ENCODE measurements at regions of chr9 and their contacts with region 1.

Region 1: DNA sequence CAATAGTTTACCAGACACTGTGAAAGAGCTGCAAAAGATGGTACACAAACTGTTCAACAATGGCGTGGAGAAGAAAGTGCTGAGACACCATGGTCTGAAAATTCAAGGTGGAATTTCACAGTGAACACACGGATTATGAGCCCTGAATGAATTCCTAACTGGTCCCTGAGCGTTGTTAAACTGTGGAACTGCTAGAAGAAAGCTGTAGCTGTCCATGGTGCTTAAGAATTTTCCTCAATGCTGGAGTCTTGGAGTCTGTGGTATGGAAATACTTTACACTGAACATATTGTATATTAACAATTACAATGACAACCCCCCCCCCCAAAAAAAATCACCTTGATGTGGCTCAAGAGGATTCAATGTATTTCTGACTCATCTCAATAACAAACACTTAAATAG is 68.5 kb downstream of the SLC24A2 start:
- DNase-seq: no peak
- ATAC-seq: no peak

Region 2: DNA sequence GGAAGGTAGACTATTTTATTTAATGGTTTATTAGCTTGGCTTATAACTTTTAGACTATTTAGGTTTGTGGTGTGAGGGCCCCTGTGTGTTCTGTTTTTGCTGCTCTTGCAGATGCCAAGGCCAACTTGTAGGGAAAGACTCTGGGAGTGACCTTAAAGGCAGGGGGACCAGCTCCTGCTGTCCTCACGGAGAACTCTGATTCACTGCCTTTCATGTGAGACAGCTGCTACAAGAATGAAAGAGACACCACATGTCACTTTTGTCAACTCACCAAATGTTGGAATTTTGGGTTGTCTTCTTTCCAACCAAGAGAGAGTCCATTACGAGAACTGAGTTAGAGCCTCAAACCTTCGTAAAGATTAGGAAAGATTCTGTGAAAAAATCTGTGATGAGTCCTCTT is 1504.8 kb before region 1 on chr9:
- intact Hi-C with region 1: loop called (anchors 5 kb)
- DNase-seq: no peak
- ATAC-seq: no peak

Region 3: GRCh38 chr9:19154135-19154612 is 566.2 kb before region 1 on chr9:
- intact Hi-C with region 1: loop called (anchors 10 kb)
- DNase-seq: no peak
- ATAC-seq: peak; percentile 73

Region 4: DNA sequence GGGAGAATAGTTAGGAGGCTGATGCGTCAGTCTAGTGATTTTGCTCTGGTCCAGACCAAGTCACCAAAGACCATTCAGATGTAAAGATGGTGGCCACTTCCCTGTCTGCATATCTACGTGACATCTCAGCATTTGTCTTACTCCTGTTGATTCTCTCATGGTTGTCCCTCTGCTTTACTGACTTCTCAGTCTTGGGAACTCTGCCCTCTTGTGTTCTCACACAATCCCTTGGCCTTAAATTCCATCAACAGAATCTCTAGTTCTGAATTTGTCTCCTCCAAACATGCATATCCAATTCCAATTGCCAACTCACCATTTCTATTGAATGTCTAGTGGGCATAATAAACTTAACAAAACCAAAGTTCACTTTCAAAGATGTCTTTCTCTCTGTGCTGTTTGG is 79.3 kb before region 1 on chr9:
- intact Hi-C with region 1: no loop called
- DNase-seq: no peak
- ATAC-seq: no peak

Region 5: DNA sequence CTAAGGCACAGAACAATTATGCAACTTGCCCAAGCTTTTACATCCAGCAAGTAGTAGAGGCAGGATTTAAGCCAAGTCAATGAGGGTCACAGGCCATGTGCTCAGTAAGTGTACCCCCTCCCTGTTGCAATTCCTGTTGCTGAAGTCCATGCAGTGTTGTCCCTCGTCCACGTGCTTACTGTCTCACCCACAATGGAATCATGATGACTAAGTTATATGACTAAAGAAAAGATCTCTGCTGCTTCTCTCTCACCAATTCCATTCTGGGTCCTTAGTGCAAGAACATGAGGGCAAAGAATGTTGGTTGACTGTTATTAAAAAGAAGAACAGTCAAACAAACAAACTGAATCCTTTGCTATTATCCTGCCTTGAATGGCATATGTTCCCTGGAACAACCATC is 302.0 kb after region 1 on chr9:
- intact Hi-C with region 1: no loop called
- DNase-seq: no peak
- ATAC-seq: no peak

Measured in sciatic nerve (tissue), 2 donors.